Adrenal gland (tissue), 19 donors: ENCODE measurements at regions of chr9 and their contacts with region 1.

Region 1: DNA sequence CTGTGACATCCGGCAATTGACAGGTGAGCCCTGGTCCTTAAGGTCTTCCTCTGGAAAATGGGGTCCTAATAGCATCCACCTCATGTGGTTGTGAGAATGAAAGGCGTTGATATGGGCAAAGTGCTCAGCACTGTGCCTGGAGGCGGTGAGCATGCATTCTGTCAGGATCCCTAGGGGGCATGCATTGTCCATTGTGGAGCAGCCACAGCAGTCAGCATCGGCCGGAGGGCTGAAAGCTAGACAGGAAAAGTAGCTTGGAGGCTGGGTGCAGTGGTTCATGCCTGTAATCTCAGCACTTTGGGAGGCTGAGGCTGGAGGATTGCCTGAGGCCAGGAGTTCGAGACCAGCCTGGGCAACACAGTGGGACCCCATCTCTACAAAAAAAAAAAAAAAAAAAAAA is 122.2 kb downstream of the LHX2 start:
- DNase-seq: peak in 6 of 7 donors; percentile 23 to 68 (median 30)
- H3K4me3 ChIP-seq: no peak overlapping the region
- H3K27ac ChIP-seq: no peak overlapping the region
- H3K4me1 ChIP-seq: no peaks in the 10 kb centered on the region
- H3K27me3 ChIP-seq: no peaks in the 10 kb centered on the region
- CTCF ChIP-seq: peak in 3 of 6 experiments; percentile 9 to 42 (median 25)
- POLR2A ChIP-seq: no peak

Region 2: GRCh38 chr9:124320062-124320973 is 186.6 kb after region 1 on chr9:
- intact Hi-C with region 1: loop called in 1 of 2 experiments (anchors 5 kb)
- DNase-seq: peak; percentile 67 to 87 (median 76)
- H3K4me3 ChIP-seq: no peak overlapping the region
- H3K27ac ChIP-seq: no peak overlapping the region
- H3K4me1 ChIP-seq: no peaks in the 10 kb centered on the region
- H3K27me3 ChIP-seq: no peaks in the 10 kb centered on the region
- CTCF ChIP-seq: peak; percentile 76 to 89 (median 84)
- POLR2A ChIP-seq: no peak

Region 3: DNA sequence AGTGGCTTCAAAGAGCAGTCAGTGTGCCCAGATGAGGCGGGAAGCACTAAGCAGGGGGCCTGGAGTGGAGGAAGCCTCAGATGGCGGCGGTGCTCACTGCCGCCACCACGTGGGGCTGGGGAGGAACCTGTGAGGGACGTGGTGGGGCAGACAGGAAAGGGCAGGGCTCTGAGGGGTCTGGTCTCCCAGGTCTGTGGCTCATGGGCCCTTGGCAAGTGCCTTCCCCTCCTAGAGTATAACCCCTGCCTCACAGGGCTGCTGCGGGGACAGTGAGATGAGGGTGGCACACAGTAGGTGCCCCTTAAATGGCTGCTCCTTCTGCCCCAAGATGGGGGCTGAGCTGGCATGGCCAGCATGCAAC is 346.9 kb after region 1 on chr9:
- intact Hi-C with region 1: no loop called
- DNase-seq: peak in 4 of 7 donors; percentile 63 to 68 (median 66)
- H3K4me3 ChIP-seq: no peak overlapping the region
- H3K27ac ChIP-seq: peak overlapping the region in 4 of 5 donors; percentile 4 to 68 (median 56)
- H3K4me1 ChIP-seq: peaks cover 8 to 14% of the 10 kb centered on the region in 2 donors
- H3K27me3 ChIP-seq: peaks cover 7% of the 10 kb centered on the region
- CTCF ChIP-seq: peak in 5 of 6 experiments; percentile 22 to 51 (median 42)
- POLR2A ChIP-seq: no peak